Cardiac septum (tissue), 1 donor: ENCODE measurements at regions of chr7 and their contacts with region 1.

Region 1: GRCh38 chr7:87152107-87152844 is at the start of gene DMTF1:
- DNase-seq: peak; percentile 98
- total RNA-seq, gene DMTF1: 38.9 TPM

Region 2: DNA sequence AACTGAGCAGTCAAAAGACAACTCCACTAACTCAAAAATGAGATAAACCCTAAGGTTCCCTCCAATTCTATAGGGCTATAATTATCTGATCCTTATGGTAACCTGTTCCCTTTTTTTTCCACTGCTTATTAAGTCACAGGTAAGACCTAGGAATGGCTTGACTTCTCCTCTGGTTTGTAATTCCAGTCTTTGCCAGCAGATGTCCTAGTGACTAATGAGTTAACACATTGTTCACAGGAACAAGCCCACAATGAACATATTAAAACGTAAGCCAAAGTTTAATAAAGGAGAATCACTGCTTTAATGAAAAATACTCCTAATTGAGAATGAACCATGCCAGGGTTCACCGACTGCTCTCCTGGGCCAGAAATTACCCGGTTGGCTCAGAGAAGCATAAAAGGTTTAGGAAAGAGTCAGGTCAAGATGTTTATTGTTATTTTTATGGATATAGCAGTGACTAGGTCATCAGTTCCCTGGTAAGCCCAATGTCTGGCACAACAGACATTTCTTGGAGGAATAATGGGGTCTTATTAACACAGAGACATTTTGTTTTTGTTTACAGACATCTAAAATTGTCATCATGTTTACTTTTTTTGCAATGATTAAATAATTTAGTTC is 213.0 kb before region 1 on chr7:
- intact Hi-C with region 1: loop called (anchors 2 kb)
- DNase-seq: no peak

Region 3: GRCh38 chr7:87027900-87028299 is 124.4 kb before region 1 on chr7:
- intact Hi-C with region 1: no loop called
- DNase-seq: no peak

Region 4: GRCh38 chr7:87059525-87060287 is 92.6 kb before region 1 on chr7 and contains the start of gene ELAPOR2:
- intact Hi-C with region 1: loop called (anchors 5 kb)
- DNase-seq: peak; percentile 86
- total RNA-seq, gene ELAPOR2: 8.9 TPM

Region 5: GRCh38 chr7:87219545-87220025 is 67.3 kb after region 1 on chr7 and contains the start of gene TMEM243:
- intact Hi-C with region 1: loop called (anchors 1 kb)
- DNase-seq: peak; percentile 94
- total RNA-seq, gene TMEM243: 5.9 TPM

Region 6: DNA sequence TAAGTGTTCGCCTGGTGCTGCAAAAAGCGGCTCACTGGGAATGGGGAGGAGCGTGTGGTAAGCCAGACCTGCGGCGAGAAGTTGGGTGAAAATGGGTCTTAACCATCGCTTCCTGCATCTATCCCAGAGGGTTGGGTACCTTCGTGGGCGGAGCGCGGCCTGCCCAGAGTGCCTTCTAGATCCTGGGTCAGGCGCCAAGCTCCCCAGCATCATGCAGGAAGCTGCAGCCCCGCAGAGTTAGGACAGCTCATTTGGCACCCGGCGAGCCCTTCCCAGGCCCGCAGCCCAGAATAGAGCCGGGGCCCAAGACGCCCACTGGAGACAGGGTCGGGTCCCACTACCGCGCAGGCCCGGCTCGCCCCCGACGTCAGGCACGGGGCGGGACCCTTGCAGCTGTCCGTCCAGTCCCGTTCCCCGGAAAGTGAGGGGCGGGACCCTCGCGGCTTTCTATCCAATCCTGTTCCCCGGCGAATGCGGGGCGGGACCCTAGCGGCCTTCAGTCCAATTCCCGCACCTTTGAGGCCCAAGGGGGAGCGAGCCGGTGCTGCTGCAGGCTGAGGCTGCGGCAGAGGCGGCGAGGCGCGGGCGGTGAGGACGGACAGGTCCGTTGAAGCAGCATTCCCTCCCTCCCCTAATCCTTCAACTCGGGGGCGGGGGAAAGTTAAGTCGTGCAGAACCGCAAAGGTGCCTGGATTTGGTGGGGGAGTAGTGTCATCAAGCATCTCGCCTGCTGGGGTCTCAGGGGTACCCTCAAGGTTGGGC is 193.1 kb after region 1 on chr7 and contains the start of gene CROT:
- intact Hi-C with region 1: loop called (anchors 10 kb)
- DNase-seq: peak; percentile 98
- total RNA-seq, gene CROT: 7.5 TPM

Region 7: GRCh38 chr7:87876040-87876868 is 724.0 kb after region 1 on chr7 and contains the starts of genes DBF4 and SLC25A40:
- intact Hi-C with region 1: loop called (anchors 10 kb)
- DNase-seq: peak; percentile 98
- total RNA-seq, gene DBF4: 2.5 TPM
- total RNA-seq, gene SLC25A40: 20.0 TPM